Heart left ventricle (tissue), 16 donors: ENCODE measurements at regions of chr18 and their contacts with region 1.

Region 1: DNA sequence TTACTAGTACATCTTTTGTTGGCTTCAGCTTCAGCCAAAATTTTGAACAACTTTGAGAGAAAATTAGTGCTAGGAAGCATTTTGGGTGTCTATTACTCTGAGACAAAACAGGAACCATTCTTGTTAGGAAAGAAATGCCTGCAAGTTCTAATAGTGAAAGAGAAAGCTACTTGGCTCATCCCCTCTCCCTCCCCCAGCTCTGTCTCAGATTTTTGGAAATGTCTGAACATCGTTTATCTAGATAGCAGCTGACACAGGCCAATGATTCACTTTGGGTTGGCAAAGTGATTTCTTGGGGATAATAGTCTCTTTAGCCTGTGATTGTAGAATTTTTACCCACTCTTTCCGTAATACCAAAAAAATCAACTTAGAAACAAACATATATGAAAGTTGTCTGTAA is 42.3 kb upstream of the PTPRM start:
- DNase-seq: no peak
- ATAC-seq: peak in 2 of 4 donors; percentile 53 to 59
- H3K4me3 ChIP-seq: no peak overlapping the region
- H3K27ac ChIP-seq: peak overlapping the region in 11 of 12 donors; percentile 13 to 69 (median 41)
- H3K4me1 ChIP-seq: peaks cover 0 to 14% (median 3%) of the 10 kb centered on the region in 12 donors
- H3K27me3 ChIP-seq: no peaks in the 10 kb centered on the region
- CTCF ChIP-seq: no peak
- POLR2A ChIP-seq: no peak

Region 2: GRCh38 chr18:7233134-7233810 is 291.5 kb before region 1 on chr18:
- intact Hi-C with region 1: no loop called
- DNase-seq: no peak
- ATAC-seq: peak in 1 of 4 donors; percentile 3
- H3K4me3 ChIP-seq: no peak overlapping the region
- H3K27ac ChIP-seq: peak overlapping the region in 10 of 12 donors; percentile 23 to 87 (median 64)
- H3K4me1 ChIP-seq: peaks cover 0 to 50% (median 11%) of the 10 kb centered on the region in 12 donors
- H3K27me3 ChIP-seq: no peaks in the 10 kb centered on the region
- CTCF ChIP-seq: no peak
- POLR2A ChIP-seq: no peak

Region 3: GRCh38 chr18:7452331-7452730 is 72.5 kb before region 1 on chr18:
- intact Hi-C with region 1: loop called in 1 of 10 experiments (anchors 10 kb)
- DNase-seq: no peak
- ATAC-seq: peak; percentile 63 to 88 (median 78)
- H3K4me3 ChIP-seq: no peak overlapping the region
- H3K27ac ChIP-seq: no peak overlapping the region
- H3K4me1 ChIP-seq: peaks cover 0 to 13% (median 0%) of the 10 kb centered on the region in 12 donors
- H3K27me3 ChIP-seq: no peaks in the 10 kb centered on the region
- CTCF ChIP-seq: peak; percentile 35 to 74 (median 60)
- POLR2A ChIP-seq: no peak